Calu3 (cell line): ENCODE measurements at regions of chrX and their contacts with region 1.

Region 1: GRCh38 chrX:55907968-55908607 is 190.5 kb downstream of the RRAGB start:
- DNase-seq: peak; percentile 83
- H3K4me3 Mint-ChIP-seq: peak overlapping the region; percentile 78
- H3K27ac Mint-ChIP-seq: peak overlapping the region; percentile 79
- H3K4me1 Mint-ChIP-seq: peaks cover 32% of the 10 kb centered on the region
- H3K27me3 Mint-ChIP-seq: no peaks in the 10 kb centered on the region
- CTCF ChIP-seq: peak; percentile 56

Region 2: DNA sequence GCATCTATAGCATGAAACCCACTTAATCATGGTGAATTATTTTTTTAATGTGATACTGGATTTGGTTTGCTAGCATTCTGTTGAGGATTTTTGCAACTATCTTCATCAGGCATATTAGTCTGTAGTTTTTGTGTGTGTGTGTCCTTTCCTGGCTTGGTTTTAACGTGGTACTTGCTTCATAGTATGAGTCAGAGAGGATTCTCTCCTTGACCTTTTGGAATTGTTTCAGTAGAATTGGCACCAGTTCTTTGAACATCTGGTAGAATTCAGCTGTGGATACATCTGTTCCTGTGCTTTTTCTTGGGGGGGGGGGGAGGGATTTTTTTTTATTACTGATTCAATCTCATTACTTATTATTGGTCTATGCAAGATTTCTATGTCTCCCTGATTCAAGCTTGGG is 92.1 kb after region 1 on chrX:
- CTCF ChIA-PET with region 1: no interaction called
- intact Hi-C with region 1: no loop called
- DNase-seq: no peak
- H3K4me3 Mint-ChIP-seq: no peak overlapping the region
- H3K27ac Mint-ChIP-seq: no peak overlapping the region
- H3K4me1 Mint-ChIP-seq: no peaks in the 10 kb centered on the region
- H3K27me3 Mint-ChIP-seq: no peaks in the 10 kb centered on the region
- CTCF ChIP-seq: no peak

Region 3: DNA sequence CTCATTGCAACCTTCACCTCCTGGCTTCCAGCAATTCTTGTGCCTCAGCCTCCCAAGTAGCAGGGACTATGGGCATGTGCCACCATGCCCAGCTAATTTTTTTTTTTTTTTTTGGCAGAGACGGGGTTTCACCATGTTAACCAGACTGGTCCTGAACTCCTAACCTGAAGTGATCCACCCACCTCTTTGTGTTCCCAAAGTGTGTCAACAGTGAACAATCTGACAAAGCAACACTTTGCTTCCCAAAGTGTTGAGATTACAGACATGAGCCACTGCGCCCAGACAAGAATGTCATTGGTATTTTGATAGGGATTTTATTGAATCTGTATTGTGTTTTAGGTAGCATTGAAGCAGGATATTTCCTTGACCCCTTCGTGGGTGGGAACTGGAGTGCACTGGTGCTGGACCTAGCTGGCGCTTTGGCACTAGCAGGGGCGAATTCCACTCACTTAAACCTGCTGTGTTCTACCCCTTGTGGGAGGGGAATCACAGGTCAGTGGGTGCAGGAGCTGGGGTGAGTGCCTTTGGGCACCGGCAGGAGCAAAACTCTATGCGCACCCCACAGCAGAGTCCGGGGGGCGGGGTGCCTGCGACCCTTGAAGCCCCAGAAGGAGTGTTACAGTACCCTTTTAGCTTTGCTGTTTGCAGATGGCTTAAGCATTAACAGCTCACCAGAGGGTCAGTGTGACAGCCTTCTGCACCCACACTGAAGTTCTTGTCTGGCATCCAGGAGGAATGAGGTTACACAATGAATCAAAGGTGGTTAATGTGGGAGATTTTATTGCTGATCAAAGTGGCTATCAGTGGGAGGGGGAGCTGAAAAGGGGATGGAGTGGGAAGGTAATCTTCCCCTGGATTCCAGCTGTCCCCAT is 346.0 kb after region 1 on chrX:
- CTCF ChIA-PET with region 1: interaction called, 15 read pairs
- intact Hi-C with region 1: loop called (anchors 5 kb)
- DNase-seq: no peak
- H3K4me3 Mint-ChIP-seq: no peak overlapping the region
- H3K27ac Mint-ChIP-seq: no peak overlapping the region
- H3K4me1 Mint-ChIP-seq: peaks cover 10% of the 10 kb centered on the region
- H3K27me3 Mint-ChIP-seq: no peaks in the 10 kb centered on the region
- CTCF ChIP-seq: no peak